Activated CD8-positive, alpha-beta T cell treated with anti-CD3 and anti-CD28 coated beads, Interleukin-2, amount 10 ng/mL, durations not matched to agents 7 days and 5 days (primary cell): ENCODE measurements at regions of chr16 and their contacts with region 1.

Region 1: GRCh38 chr16:84617791-84618580 is at the start of gene COTL1:
- DNase-seq: peak; percentile 97
- ATAC-seq: peak; percentile 85
- H3K4me3 Mint-ChIP-seq: peak within 1 kb of the TSS; percentile 98
- H3K27ac Mint-ChIP-seq: peak within 1 kb of the TSS; percentile 88
- H3K4me1 Mint-ChIP-seq: peaks cover 58% of the 10 kb centered on the region
- H3K27me3 Mint-ChIP-seq: peaks cover 6% of the 10 kb centered on the region
- total RNA-seq, gene COTL1: 837 to 887 TPM

Region 2: DNA sequence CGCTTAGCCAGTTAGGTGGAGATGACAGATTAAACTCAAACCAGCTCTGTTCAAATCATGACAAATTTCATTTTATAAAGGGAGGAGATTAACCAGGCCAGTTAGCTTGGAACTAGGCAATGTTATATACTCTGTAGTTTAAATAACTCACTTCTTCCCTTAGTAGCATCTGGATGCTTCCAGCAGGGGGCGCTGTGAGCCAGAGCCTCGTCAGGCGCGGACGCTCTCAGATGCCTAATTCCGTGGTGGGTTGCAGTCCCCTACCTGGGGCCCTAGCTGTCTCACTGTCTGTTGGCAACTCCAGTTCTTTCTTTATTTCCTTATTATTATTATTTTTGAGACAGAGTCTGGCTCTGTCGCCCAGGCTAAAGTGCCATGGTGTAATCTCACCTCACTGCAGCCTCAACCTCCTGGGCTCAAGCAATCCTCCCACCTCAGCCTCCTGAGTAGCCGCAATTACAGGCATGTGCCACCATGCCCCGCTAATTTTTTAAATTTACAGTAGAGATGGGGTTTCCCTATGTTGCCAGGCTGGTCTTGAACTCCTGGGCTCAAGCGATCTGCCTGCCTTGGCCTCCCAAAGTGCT is 340.7 kb before region 1 on chr16:
- CTCF ChIA-PET with region 1: interaction called, 13 read pairs
- POLR2A ChIA-PET with region 1: no interaction called
- DNase-seq: peak; percentile 78
- ATAC-seq: peak; percentile 89
- H3K4me3 Mint-ChIP-seq: no peak overlapping the region
- H3K27ac Mint-ChIP-seq: no peak overlapping the region
- H3K4me1 Mint-ChIP-seq: no peaks in the 10 kb centered on the region
- H3K27me3 Mint-ChIP-seq: peaks cover 4% of the 10 kb centered on the region

Region 3: GRCh38 chr16:84511180-84511824 is 106.7 kb before region 1 on chr16:
- CTCF ChIA-PET with region 1: interaction called, 44 read pairs
- POLR2A ChIA-PET with region 1: interaction called, 4 read pairs
- DNase-seq: peak; percentile 89
- ATAC-seq: no peak
- H3K4me3 Mint-ChIP-seq: peak overlapping the region; percentile 55
- H3K27ac Mint-ChIP-seq: peak overlapping the region; percentile 88
- H3K4me1 Mint-ChIP-seq: peaks cover 91% of the 10 kb centered on the region
- H3K27me3 Mint-ChIP-seq: no peaks in the 10 kb centered on the region

Region 4: DNA sequence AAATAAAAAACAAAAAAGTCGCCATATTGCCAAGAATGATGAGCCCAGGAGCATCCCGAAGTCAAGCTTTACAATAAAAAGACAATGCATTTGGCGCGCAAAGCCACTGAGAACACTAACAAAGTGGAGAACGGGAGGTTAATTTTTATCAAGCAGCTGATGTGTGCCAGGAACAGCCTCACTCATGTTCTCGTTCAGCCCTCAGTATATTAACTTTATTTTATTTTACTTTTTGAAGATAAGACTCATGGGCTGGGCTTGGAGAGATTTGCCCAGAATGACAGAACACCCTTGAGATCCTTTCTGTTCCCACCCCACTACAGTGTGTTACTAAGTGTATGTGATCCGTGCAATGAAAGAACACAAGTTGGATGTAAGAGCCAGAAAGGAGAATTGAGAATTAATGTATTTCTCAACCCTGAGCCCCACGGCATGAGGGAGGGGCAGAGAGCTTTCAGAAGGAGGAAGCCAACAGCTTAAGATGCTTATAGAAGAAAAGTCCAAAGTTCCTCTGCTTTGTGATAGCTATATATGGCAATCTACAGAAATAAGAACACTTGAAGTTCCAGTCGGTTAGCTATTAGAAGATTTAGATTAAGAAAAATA is 48.5 kb before region 1 on chr16:
- CTCF ChIA-PET with region 1: interaction called, 11 read pairs
- POLR2A ChIA-PET with region 1: interaction called, 7 read pairs
- DNase-seq: no peak
- ATAC-seq: no peak
- H3K4me3 Mint-ChIP-seq: no peak overlapping the region
- H3K27ac Mint-ChIP-seq: peak overlapping the region; percentile 40
- H3K4me1 Mint-ChIP-seq: peaks cover 62% of the 10 kb centered on the region
- H3K27me3 Mint-ChIP-seq: no peaks in the 10 kb centered on the region

Region 5: DNA sequence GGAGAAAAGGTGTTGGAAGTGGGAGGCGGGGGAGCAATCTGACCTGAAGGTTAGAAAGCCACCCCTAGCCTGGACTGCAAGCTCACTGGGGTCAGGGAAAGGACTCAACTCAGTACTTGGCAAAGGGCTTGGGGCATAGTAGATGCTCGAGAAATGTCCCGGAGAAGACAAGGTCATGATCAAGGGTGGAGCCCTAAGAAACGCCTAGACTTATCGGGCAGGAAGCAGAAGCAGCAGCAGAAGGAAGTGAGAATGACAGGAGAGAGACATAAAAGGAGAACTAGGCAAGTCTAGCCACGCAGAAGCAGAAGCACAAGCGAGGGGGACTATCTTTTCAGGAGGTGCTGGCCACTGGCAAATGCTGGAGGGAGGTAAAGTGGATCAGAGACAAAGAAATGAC is 10.3 kb before region 1 on chr16:
- CTCF ChIA-PET with region 1: interaction called, 8 read pairs
- POLR2A ChIA-PET with region 1: interaction called, 10 read pairs
- DNase-seq: peak; percentile 56
- ATAC-seq: peak; percentile 52
- H3K4me3 Mint-ChIP-seq: peak overlapping the region; percentile 70
- H3K27ac Mint-ChIP-seq: peak overlapping the region; percentile 92
- H3K4me1 Mint-ChIP-seq: peaks cover 94% of the 10 kb centered on the region
- H3K27me3 Mint-ChIP-seq: no peaks in the 10 kb centered on the region

Region 6: GRCh38 chr16:84647828-84648594 is 30.0 kb after region 1 on chr16 and contains the start of gene KLHL36:
- CTCF ChIA-PET with region 1: interaction called, 12 read pairs
- POLR2A ChIA-PET with region 1: no interaction called
- DNase-seq: peak; percentile 66
- ATAC-seq: peak; percentile 84
- H3K4me3 Mint-ChIP-seq: peak within 1 kb of the TSS; percentile 72
- H3K27ac Mint-ChIP-seq: peak within 1 kb of the TSS; percentile 71
- H3K4me1 Mint-ChIP-seq: peaks cover 40% of the 10 kb centered on the region
- H3K27me3 Mint-ChIP-seq: peaks cover 19% of the 10 kb centered on the region
- total RNA-seq, gene KLHL36: 31.4 to 32.6 TPM